IMR-90 (cell line): ENCODE measurements at regions of chr2 and their contacts with region 1.

Region 1: DNA sequence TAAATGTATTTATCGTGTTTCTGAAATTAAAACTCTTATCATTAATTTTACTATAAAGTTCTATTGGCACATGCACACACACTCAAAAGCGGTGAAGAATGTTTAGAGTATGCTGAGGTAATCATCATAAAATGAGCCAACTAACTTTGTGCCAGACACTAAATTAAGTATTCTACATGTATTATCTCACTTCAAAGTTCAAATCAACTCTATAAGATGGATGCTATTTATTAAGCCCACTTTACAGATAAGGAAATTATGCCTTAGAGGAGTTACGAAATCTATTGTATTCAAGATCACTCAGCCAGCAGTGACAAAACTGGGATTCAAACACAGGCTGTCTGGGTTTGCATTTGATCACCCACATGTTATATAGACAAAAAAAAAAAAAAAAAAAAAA is 24.9 kb downstream of the OLA1 start:
- DNase-seq: no peak
- ATAC-seq: no peak
- H3K4me3 ChIP-seq: no peak overlapping the region
- H3K27ac ChIP-seq: no peak overlapping the region
- H3K4me1 ChIP-seq: no peaks in the 10 kb centered on the region
- H3K27me3 ChIP-seq: no peaks in the 10 kb centered on the region
- CTCF ChIP-seq: no peak
- POLR2A ChIP-seq: no peak
- RAD21 ChIP-seq: no peak

Region 2: GRCh38 chr2:174023591-174024523 is 199.5 kb before region 1 on chr2:
- CTCF ChIA-PET with region 1: no interaction called
- POLR2A ChIA-PET with region 1: no interaction called
- dilution Hi-C with region 1: no loop called
- in situ Hi-C with region 1: no loop called
- intact Hi-C with region 1: no loop called
- DNase-seq: peak; percentile 95
- ATAC-seq: peak; percentile 56
- H3K4me3 ChIP-seq: no peak overlapping the region
- H3K27ac ChIP-seq: peak overlapping the region; percentile 89
- H3K4me1 ChIP-seq: peaks cover 25% of the 10 kb centered on the region
- H3K27me3 ChIP-seq: no peaks in the 10 kb centered on the region
- CTCF ChIP-seq: no peak
- POLR2A ChIP-seq: peak; percentile 54
- RAD21 ChIP-seq: no peak

Region 3: DNA sequence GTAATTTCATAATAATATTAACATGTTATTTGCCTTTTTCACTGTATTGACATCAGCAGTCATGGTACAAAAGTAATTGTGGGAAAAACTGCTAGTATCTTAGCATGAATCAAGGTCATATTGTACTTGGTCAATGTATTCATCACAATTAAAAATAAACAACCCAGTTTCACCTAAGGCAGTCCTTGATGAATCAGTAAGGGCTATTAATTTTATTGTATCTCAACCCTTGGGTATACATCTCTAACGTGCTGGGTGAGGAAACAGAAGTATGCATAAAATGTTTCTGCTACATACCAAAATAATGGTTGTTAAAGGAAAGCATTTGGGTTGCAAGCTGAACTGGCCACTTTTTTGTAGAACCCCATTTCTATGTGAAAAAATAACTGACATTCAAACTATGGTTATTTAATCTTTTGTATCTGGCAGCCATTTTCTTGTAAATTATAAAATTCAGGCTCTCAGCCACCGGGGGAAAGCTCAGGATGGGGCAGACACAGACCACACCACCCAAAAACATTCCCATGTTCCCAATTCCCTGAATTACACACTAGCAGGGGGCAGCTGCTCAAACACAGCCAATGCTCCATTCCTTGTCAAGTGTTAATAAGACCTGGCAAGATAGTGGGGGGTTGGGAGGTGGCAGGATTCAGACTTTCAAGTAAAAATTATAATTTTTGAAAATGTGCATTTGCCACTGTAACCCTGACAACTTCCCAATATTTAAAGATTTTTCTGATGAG is 24.4 kb before region 1 on chr2:
- CTCF ChIA-PET with region 1: no interaction called
- POLR2A ChIA-PET with region 1: no interaction called
- dilution Hi-C with region 1: no loop called
- in situ Hi-C with region 1: no loop called
- intact Hi-C with region 1: loop called (anchors 2 kb)
- DNase-seq: peak; percentile 34
- ATAC-seq: peak; percentile 67; the same call in 1 of the 2 replicates
- H3K4me3 ChIP-seq: no peak overlapping the region
- H3K27ac ChIP-seq: no peak overlapping the region
- H3K4me1 ChIP-seq: peaks cover 3% of the 10 kb centered on the region
- H3K27me3 ChIP-seq: no peaks in the 10 kb centered on the region
- CTCF ChIP-seq: no peak
- POLR2A ChIP-seq: no peak
- RAD21 ChIP-seq: no peak

Region 4: DNA sequence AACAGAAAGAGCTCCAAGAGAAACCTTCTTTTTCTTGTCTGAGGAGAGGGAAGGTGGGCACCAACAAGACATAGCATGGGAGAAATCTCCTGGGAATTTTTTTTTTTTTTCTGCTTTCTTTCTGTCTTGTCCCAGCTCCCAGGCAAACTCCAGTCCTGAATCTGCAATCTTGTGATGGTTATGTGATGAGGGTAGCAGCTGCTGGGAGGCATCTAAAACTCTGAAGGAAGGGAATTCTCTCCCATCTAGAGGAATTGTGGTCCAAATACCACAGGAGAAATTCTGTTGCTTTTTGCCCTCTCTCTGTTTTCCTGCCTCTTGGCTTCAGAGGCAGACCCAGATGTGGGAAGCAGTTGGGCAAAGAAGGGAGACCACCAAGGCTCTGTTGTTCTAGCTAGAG is 188.9 kb after region 1 on chr2:
- CTCF ChIA-PET with region 1: no interaction called
- POLR2A ChIA-PET with region 1: no interaction called
- dilution Hi-C with region 1: no loop called
- in situ Hi-C with region 1: no loop called
- intact Hi-C with region 1: no loop called
- DNase-seq: no peak
- ATAC-seq: no peak
- H3K4me3 ChIP-seq: no peak overlapping the region
- H3K27ac ChIP-seq: no peak overlapping the region
- H3K4me1 ChIP-seq: no peaks in the 10 kb centered on the region
- H3K27me3 ChIP-seq: no peaks in the 10 kb centered on the region
- CTCF ChIP-seq: no peak
- POLR2A ChIP-seq: no peak
- RAD21 ChIP-seq: no peak